ENCODE measurements at regions of chr11 and their contacts with region 1.

Region 1: GRCh38 chr11:78310500-78310909 is 107.1 kb downstream of the GAB2 start:
- DNase-seq: no peak
- H3K4me3 ChIP-seq: no peak overlapping the region
- H3K27ac ChIP-seq: no peak overlapping the region
- H3K4me1 ChIP-seq: peaks cover 19% of the 10 kb centered on the region
- H3K27me3 ChIP-seq: no peaks in the 10 kb centered on the region
- CTCF ChIP-seq: no peak

Region 2: DNA sequence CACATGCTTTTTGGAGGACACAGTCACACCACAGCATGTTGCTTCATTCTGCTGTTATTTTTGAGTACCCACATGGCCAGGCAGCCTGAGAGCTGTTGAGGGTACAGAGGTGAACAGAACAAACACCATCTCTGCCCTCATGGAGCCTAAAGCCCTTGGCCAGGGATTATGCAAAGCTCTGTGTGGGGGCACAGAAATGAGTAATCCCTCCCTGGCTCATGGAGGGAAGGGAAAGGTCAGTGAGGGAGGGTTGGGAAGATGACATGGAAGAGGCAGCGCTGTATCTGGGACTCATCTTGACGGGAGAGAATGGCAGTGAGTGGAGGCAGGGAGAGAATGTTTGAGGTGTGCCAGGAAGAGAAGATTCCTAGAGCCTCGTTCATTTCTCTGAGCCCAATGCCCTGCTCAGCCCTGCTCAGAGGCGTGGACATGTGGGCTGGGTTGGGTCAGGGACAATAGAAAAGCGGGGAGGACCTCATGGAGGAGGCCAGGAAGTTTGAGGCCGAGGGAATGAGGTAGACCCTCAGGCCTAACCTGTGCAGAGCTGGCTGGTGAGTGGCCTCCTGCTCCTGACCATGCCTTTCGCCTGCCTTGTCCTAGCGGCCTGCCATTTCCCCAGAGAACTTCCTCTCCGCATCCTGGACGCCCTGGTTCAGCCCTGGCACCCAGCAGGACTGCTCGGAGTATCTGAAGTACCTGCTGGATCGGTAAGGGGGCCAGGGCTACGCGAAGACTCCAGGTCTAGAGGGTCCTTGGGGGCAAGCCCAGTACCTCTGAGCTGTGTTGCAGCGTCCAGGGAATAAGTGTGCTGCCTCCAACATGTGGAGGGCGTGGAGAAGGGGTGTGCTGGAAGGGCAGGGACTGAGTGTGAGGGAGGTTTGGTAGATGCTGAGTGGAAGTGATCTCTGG is 102.0 kb before region 1 on chr11:
- CTCF ChIA-PET with region 1: no interaction called
- dilution Hi-C with region 1: loop called (anchors 5 kb)
- in situ Hi-C with region 1: no loop called
- intact Hi-C with region 1: no loop called
- DNase-seq: no peak
- H3K4me3 ChIP-seq: no peak overlapping the region
- H3K27ac ChIP-seq: no peak overlapping the region
- H3K4me1 ChIP-seq: no peaks in the 10 kb centered on the region
- H3K27me3 ChIP-seq: no peaks in the 10 kb centered on the region
- CTCF ChIP-seq: no peak